Activated CD8-positive, alpha-beta T cell treated with anti-CD3 and anti-CD28 coated beads, Interleukin-2, amount 10 ng/mL, durations not matched to agents 7 days and 5 days (primary cell): ENCODE measurements at regions of chr2 and their contacts with region 1.

Region 1: GRCh38 chr2:68751397-68752339 is 17.1 kb downstream of the ARHGAP25 start:
- DNase-seq: peak; percentile 95
- ATAC-seq: peak; percentile 98
- H3K4me3 Mint-ChIP-seq: peak overlapping the region; percentile 35
- H3K27ac Mint-ChIP-seq: peak overlapping the region; percentile 78
- H3K4me1 Mint-ChIP-seq: peaks cover 87% of the 10 kb centered on the region
- H3K27me3 Mint-ChIP-seq: no peaks in the 10 kb centered on the region

Region 2: GRCh38 chr2:68734688-68735525 is 16.8 kb before region 1 on chr2 and contains the start of gene ARHGAP25:
- CTCF ChIA-PET with region 1: interaction called, 449 read pairs
- POLR2A ChIA-PET with region 1: interaction called, 5 read pairs
- DNase-seq: peak; percentile 67
- ATAC-seq: peak; percentile 59
- H3K4me3 Mint-ChIP-seq: no peak within 1 kb of the TSS
- H3K27ac Mint-ChIP-seq: no peak within 1 kb of the TSS
- H3K4me1 Mint-ChIP-seq: peaks cover 35% of the 10 kb centered on the region
- H3K27me3 Mint-ChIP-seq: no peaks in the 10 kb centered on the region
- total RNA-seq, gene ARHGAP25: 68.2 to 68.7 TPM

Region 3: DNA sequence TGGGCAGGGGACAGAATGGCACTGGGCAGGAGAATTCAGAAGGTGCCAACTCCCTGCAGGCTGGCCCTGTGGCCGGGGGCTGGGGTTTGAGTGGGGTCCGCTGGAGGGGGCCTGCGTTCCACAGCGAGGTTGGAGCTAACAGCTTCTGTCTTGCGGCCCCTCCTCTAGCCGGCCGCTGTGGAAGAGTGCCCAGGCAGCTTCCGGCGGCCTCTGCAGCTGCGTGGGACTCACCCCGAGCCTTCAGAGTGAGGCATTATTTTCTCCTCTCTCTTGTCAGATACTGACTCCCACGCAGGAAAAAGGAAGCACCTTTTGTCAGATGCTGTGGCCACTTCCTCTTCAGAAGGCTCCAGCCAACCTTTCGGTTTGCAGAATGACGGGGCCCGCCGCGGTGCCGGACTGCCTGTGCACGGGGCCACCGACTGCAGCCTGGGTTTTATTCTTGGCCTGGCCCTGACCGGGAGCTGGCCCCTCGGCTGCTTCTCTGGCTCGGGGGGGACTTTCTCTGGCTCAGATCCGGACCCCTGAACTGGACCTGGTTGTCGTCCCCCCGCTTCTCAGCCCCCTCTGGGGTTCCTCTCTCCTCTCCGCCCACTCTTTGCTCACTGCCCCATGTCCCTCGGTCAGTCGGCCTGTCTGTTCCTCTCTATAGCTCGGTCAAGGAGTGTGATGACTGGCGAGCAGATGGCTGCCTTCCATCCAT is 23.1 kb after region 1 on chr2:
- CTCF ChIA-PET with region 1: interaction called, 448 read pairs
- POLR2A ChIA-PET with region 1: interaction called, 5 read pairs
- DNase-seq: peak; percentile 77
- ATAC-seq: peak; percentile 84
- H3K4me3 Mint-ChIP-seq: peak overlapping the region; percentile 81
- H3K27ac Mint-ChIP-seq: peak overlapping the region; percentile 97
- H3K4me1 Mint-ChIP-seq: peaks cover 86% of the 10 kb centered on the region
- H3K27me3 Mint-ChIP-seq: no peaks in the 10 kb centered on the region

Region 4: DNA sequence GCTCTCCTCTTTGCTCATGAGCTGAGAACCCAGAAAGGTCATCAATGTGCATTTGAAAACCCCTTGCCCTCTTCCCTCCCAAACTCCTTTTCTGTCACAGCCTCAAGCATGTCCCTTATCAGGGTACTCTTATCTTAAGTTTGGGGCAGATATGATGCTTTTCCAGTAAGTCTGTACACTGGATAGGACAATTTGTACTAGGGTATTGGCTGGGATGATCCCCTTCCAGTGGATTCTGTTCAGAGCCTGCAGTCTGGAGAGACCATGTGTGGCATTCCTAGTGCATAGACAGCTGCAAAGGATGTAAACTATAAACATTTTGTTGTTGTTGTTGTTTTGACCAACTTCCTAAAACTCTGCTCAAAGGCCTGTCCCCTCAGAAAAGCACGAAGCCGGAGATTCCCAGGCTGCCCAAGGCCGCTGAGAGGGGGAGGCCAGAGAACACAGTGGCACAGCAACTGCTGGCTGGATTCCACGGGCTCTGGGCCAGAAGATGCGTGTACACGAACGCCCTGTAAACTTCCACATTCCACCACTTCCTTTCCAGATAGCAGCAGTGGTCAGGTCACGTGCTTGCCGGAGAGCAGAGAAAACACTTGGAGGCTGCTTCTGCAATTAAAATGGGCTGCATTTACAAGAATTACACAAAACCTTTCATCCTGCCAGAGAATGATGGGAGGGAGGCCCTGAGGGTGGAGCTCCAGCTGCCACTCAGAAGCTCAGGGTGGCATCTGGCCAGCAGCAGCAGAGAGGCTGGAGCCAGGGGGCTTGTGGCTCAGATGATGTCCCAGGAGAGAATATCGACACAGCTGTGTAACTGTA is 77.4 kb after region 1 on chr2:
- CTCF ChIA-PET with region 1: interaction called, 59 read pairs
- POLR2A ChIA-PET with region 1: interaction called, 3 read pairs
- DNase-seq: peak; percentile 83
- ATAC-seq: peak; percentile 70
- H3K4me3 Mint-ChIP-seq: peak overlapping the region; percentile 71
- H3K27ac Mint-ChIP-seq: peak overlapping the region; percentile 90
- H3K4me1 Mint-ChIP-seq: peaks cover 65% of the 10 kb centered on the region
- H3K27me3 Mint-ChIP-seq: no peaks in the 10 kb centered on the region